B cell (primary cell): ENCODE measurements at regions of chr14 and their contacts with region 1.

Region 1: DNA sequence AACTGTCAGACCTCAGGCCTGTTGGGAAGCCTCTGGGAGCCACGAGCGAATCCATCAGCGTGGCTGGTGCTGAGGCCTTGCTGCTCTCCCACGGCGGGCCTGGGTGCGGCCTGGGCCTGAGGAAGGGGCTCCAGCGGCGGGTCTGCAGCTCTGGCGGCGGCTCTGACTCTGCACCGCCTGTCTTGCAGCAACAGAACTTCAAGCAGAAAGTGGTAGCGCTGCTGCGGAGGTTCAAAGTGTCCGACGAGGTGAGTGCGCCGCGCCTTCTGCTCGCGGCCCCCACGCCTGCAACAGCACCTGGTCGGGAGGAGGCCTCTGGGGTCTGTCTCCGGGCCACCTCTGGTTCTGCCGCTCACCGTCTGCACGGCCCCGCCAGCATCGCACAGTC is 28.7 kb upstream of the TEX22 start:
- DNase-seq: no peak
- ATAC-seq: no peak
- H3K4me3 ChIP-seq: no peak overlapping the region
- H3K4me3 Mint-ChIP-seq: no peak overlapping the region
- H3K27ac ChIP-seq: no peak overlapping the region
- H3K27ac Mint-ChIP-seq: no peak overlapping the region
- H3K4me1 ChIP-seq: peaks cover 5 to 11% of the 10 kb centered on the region in 2 donors
- H3K4me1 Mint-ChIP-seq: peaks cover 3% of the 10 kb centered on the region
- H3K27me3 ChIP-seq: no peaks in the 10 kb centered on the region
- H3K27me3 Mint-ChIP-seq: no peaks in the 10 kb centered on the region
- CTCF ChIP-seq: no peak

Region 2: DNA sequence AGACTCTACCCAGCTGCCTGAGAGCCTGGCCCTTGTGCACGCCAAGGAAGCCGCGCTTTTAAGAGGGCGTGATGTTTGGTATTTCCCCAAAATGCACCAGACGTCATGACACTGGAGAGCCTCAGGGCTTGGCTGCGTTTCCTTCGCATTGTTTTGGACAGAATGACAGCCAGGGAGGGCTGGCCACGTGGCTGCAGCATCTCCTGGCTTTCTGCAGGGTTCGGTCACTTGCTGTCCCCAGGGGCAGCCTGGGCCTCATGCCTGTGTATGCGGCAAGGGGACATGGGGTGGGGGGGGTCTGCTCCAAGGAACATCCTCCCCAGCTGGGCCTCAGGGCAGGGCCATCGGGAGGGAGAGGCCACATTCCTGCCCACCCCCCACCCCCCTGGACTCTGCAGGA is 172.4 kb before region 1 on chr14:
- CTCF ChIA-PET with region 1: no interaction called
- POLR2A ChIA-PET with region 1: no interaction called
- intact Hi-C with region 1: no loop called
- DNase-seq: peak; percentile 71
- ATAC-seq: no peak
- H3K4me3 ChIP-seq: no peak overlapping the region
- H3K4me3 Mint-ChIP-seq: peak overlapping the region; percentile 37
- H3K27ac ChIP-seq: no peak overlapping the region
- H3K27ac Mint-ChIP-seq: no peak overlapping the region
- H3K4me1 ChIP-seq: peaks cover 55 to 59% of the 10 kb centered on the region in 2 donors
- H3K4me1 Mint-ChIP-seq: peaks cover 38% of the 10 kb centered on the region
- H3K27me3 ChIP-seq: peaks cover 0 to 88% (median 34%) of the 10 kb centered on the region in 4 experiments
- H3K27me3 Mint-ChIP-seq: peaks cover 41% of the 10 kb centered on the region
- CTCF ChIP-seq: no peak

Region 3: GRCh38 chr14:105351920-105352851 is 17.5 kb before region 1 on chr14:
- CTCF ChIA-PET with region 1: no interaction called
- POLR2A ChIA-PET with region 1: no interaction called
- intact Hi-C with region 1: no loop called
- DNase-seq: peak; percentile 94
- ATAC-seq: peak; percentile 89
- H3K4me3 ChIP-seq: no peak overlapping the region
- H3K4me3 Mint-ChIP-seq: no peak overlapping the region
- H3K27ac ChIP-seq: peak overlapping the region; percentile 44 to 81
- H3K27ac Mint-ChIP-seq: peak overlapping the region; percentile 68
- H3K4me1 ChIP-seq: peaks cover 4 to 13% of the 10 kb centered on the region in 2 donors
- H3K4me1 Mint-ChIP-seq: peaks cover 8% of the 10 kb centered on the region
- H3K27me3 ChIP-seq: no peaks in the 10 kb centered on the region
- H3K27me3 Mint-ChIP-seq: no peaks in the 10 kb centered on the region
- CTCF ChIP-seq: peak; percentile 77

Region 4: GRCh38 chr14:105398044-105398725 is 28.5 kb after region 1 on chr14 and contains the start of gene TEX22:
- CTCF ChIA-PET with region 1: interaction called, 11 read pairs
- POLR2A ChIA-PET with region 1: no interaction called
- intact Hi-C with region 1: no loop called
- DNase-seq: peak; percentile 93
- ATAC-seq: peak; percentile 88
- H3K4me3 ChIP-seq: peak within 1 kb of the TSS; percentile 31 to 94 (median 86)
- H3K4me3 Mint-ChIP-seq: peak within 1 kb of the TSS; percentile 90
- H3K27ac ChIP-seq: peak within 1 kb of the TSS; percentile 75 to 86
- H3K27ac Mint-ChIP-seq: peak within 1 kb of the TSS; percentile 91
- H3K4me1 ChIP-seq: peaks cover 16 to 23% of the 10 kb centered on the region in 2 donors
- H3K4me1 Mint-ChIP-seq: peaks cover 16% of the 10 kb centered on the region
- H3K27me3 ChIP-seq: no peaks in the 10 kb centered on the region
- H3K27me3 Mint-ChIP-seq: no peaks in the 10 kb centered on the region
- CTCF ChIP-seq: peak; percentile 36
- total RNA-seq, gene TEX22: 7.0 and 8.4 TPM in 2 replicates

Region 5: DNA sequence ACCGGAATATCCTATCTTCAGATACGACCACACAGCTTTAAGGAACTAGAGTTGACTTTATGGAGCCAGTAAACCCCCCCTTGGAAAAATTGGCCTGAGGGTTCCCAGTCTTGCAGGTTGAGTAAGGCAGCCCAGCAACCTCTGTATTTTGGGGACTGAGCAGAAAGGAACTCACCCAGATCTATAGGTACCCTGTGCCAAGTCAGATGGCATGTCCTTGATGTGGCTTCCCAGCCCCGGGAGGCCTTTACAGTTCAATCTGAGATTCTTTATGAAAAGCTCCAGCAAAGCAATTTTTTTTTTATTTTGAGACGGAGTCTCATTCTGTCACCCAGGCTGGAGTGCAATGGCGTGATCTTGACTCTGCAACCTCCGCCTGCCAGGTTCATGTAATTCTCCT is 184.4 kb after region 1 on chr14:
- CTCF ChIA-PET with region 1: no interaction called
- POLR2A ChIA-PET with region 1: no interaction called
- intact Hi-C with region 1: no loop called
- DNase-seq: no peak
- ATAC-seq: no peak
- H3K4me3 ChIP-seq: no peak overlapping the region
- H3K4me3 Mint-ChIP-seq: no peak overlapping the region
- H3K27ac ChIP-seq: no peak overlapping the region
- H3K27ac Mint-ChIP-seq: no peak overlapping the region
- H3K4me1 ChIP-seq: peaks cover 0 to 17% of the 10 kb centered on the region in 2 donors
- H3K4me1 Mint-ChIP-seq: peaks cover 7% of the 10 kb centered on the region
- H3K27me3 ChIP-seq: no peaks in the 10 kb centered on the region
- H3K27me3 Mint-ChIP-seq: peaks cover 3% of the 10 kb centered on the region
- CTCF ChIP-seq: no peak